ENCODE measurements at regions of chr4 and their contacts with region 1.

Region 1: GRCh38 chr4:99894161-99894997 is at the start of gene LAMTOR3:
- DNase-seq: peak; percentile 96
- total RNA-seq, gene LAMTOR3: 26.4 TPM

Region 2: DNA sequence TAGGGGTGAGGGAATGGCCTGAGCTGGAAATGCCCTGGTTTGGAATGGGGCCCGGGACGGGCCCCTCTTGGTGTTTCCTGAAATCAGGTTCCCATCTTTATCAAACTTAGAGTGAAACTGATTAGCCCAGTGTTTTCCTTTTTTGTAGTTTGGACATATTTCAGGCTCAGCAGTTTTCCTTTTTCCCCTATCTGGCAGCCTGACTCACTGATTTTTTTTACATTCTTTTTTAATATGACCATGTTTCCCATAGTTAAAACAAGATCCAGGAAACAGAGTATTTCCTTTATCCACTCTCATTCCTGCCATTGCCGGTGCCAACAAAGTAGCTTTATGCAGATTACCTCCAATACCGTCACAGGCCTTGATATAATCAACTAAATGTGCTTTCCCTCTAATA is 404.1 kb before region 1 on chr4:
- intact Hi-C with region 1: no loop called
- DNase-seq: no peak

Region 3: DNA sequence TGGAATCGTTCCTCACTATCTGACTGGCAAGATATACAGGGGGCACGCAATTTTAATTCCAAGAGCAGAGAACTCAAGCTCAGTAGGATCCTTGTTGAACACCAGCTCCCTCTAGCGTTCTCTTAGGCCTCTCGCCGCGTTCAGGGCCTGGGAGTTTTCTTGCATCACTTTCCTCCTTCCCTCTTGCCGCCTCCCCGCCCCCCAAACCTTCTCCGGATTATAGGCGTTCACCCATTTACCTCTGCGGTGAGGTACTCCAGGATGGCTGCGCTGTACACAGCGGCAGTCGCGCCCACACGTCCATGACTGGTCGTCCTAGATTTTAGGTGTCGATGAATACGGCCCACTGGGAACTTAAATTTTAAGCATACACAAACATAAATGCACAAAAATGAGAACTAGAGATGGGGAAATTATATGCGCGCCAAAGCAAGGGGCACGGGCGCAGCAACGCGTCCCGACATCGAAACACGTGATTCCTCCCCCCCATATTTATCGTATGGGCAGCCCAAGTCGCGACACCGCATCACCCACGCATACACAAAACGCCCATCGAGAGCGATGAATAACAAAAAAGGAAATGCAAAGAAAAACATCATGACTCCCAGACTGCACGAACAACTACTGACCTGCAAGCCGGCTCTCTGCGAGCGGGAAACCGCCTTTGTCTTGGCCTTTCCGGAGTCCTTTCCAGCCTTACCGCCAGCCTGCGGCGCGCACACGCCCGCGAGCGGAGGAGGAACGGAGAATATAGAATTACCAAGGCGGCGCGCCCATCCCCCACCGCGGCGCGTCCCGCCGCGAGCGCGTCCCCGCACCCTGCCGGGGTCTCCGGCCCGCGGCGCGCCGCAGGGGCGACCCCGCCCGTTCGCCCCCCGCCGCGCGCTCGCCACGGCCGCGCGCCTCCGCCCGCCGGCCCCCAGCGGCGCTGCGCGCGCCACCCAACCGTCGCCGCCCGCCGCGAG is 54.9 kb after region 1 on chr4:
- intact Hi-C with region 1: loop called (anchors 1 kb)
- DNase-seq: peak; percentile 94

Region 4: GRCh38 chr4:100086592-100087435 is 192.4 kb after region 1 on chr4:
- intact Hi-C with region 1: no loop called
- DNase-seq: no peak